ENCODE measurements at regions of chr10 and their contacts with region 1.

Region 1: GRCh38 chr10:130190055-130190736 is 54.0 kb downstream of the GLRX3 start:
- DNase-seq: peak; percentile 67 to 78 (median 74)
- H3K4me3 ChIP-seq: peak overlapping the region in 2 of 3 experiments; percentile 12 to 70
- H3K4me3 Mint-ChIP-seq: peak overlapping the region in 1 of 2 donors; percentile 35
- H3K27ac ChIP-seq: no peak overlapping the region
- H3K27ac Mint-ChIP-seq: no peak overlapping the region
- H3K4me1 ChIP-seq: peaks cover 3 to 7% of the 10 kb centered on the region in 2 donors
- H3K4me1 Mint-ChIP-seq: peaks cover 5% of the 10 kb centered on the region
- H3K27me3 ChIP-seq: peaks cover 0 to 21% of the 10 kb centered on the region in 2 donors
- H3K27me3 Mint-ChIP-seq: peaks cover 14 to 28% (median 18%) of the 10 kb centered on the region in 3 donors
- CTCF ChIP-seq: peak; percentile 100

Region 2: DNA sequence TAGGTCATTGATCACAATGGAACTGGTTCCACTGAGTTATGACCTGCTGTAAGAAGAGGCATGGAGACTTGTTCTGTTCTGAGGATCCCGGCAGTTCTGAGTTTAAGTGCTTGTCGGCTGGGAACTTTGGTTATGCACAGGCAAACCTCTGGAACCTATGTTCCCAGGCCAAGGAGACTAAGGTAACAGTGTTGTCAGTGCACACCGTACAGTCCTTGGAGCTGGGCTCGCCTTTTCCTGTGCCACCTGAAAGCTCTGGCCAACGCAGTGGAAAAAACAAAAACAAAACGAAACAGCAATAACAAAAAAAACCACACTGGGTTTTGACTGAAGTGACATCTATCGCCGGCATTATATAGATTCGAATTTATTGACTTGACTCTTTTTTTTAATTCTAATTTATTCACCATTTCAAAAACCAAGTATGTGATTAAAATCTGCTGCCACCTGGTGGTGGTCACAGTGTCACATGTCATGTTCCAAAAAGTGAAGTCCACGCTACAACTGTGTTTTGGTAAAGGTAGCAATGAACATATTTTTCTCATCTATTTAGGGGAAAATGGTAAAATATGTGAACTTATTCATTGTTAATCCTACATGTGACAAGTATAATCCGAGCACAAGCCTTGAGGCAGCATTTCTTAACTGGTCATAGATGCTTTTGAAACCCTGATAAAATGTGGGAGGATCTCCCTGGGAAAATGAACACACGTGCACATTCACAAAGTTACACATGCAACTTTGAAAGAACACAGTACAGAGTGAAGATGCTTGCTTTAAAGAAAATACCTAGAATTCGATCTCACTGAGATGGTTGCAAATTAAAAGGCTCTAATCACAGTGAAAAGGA is 1596.8 kb after region 1 on chr10:
- intact Hi-C with region 1: loop called (anchors 5 to 10 kb)
- DNase-seq: peak in 1 of 3 donors; percentile 0
- H3K4me3 ChIP-seq: no peak overlapping the region
- H3K4me3 Mint-ChIP-seq: no peak overlapping the region
- H3K27ac ChIP-seq: no peak overlapping the region
- H3K27ac Mint-ChIP-seq: no peak overlapping the region
- H3K4me1 ChIP-seq: no peaks in the 10 kb centered on the region
- H3K4me1 Mint-ChIP-seq: no peaks in the 10 kb centered on the region
- H3K27me3 ChIP-seq: no peaks in the 10 kb centered on the region
- H3K27me3 Mint-ChIP-seq: peaks cover 4 to 10% (median 8%) of the 10 kb centered on the region in 3 donors
- CTCF ChIP-seq: peak; percentile 70

Region 3: DNA sequence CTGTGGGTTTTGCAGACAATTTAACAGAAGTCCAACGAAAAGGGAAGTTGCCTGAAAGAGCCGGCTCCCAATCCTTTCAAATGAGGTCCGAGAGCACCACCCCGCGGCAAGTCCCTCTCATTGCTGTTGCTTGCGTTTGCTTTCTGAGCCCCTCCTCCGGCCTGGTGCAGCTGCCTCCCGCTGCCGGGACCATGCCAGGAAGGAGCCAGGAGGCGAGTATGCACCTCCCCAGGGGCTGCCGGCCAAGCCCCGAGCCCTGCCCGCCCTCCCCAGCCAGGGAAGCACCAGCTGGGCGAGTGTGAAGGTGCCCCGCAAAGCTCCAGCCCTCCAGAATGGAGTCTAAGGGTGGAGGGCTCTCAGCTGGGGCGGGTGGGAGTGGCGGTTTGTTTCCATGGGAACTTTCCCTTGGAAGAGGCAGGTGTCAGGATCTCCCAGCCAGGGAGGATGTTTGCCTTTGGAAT is 1684.8 kb after region 1 on chr10:
- intact Hi-C with region 1: loop called (anchors 2 to 5 kb)
- DNase-seq: peak; percentile 67 to 75 (median 72)
- H3K4me3 ChIP-seq: no peak overlapping the region
- H3K4me3 Mint-ChIP-seq: no peak overlapping the region
- H3K27ac ChIP-seq: no peak overlapping the region
- H3K27ac Mint-ChIP-seq: peak overlapping the region in 1 of 7 donors; percentile 58
- H3K4me1 ChIP-seq: no peaks in the 10 kb centered on the region
- H3K4me1 Mint-ChIP-seq: peaks cover 3% of the 10 kb centered on the region
- H3K27me3 ChIP-seq: no peaks in the 10 kb centered on the region
- H3K27me3 Mint-ChIP-seq: peaks cover 3 to 10% (median 6%) of the 10 kb centered on the region in 3 donors
- CTCF ChIP-seq: peak; percentile 83

Measured in CD14-positive monocyte (primary cell).